Tibial artery (tissue), 4 donors: ENCODE measurements at regions of chr16 and their contacts with region 1.

Region 1: GRCh38 chr16:75110637-75111513 is 5.7 kb downstream of the LDHD start:
- DNase-seq: peak; percentile 90 to 95
- H3K4me3 ChIP-seq: peak overlapping the region; percentile 15 to 31
- H3K27ac ChIP-seq: peak overlapping the region; percentile 73 to 86
- H3K4me1 ChIP-seq: peaks cover 0 to 69% (median 45%) of the 10 kb centered on the region in 4 donors
- H3K27me3 ChIP-seq: no peaks in the 10 kb centered on the region
- CTCF ChIP-seq: peak; percentile 93 to 95

Region 2: DNA sequence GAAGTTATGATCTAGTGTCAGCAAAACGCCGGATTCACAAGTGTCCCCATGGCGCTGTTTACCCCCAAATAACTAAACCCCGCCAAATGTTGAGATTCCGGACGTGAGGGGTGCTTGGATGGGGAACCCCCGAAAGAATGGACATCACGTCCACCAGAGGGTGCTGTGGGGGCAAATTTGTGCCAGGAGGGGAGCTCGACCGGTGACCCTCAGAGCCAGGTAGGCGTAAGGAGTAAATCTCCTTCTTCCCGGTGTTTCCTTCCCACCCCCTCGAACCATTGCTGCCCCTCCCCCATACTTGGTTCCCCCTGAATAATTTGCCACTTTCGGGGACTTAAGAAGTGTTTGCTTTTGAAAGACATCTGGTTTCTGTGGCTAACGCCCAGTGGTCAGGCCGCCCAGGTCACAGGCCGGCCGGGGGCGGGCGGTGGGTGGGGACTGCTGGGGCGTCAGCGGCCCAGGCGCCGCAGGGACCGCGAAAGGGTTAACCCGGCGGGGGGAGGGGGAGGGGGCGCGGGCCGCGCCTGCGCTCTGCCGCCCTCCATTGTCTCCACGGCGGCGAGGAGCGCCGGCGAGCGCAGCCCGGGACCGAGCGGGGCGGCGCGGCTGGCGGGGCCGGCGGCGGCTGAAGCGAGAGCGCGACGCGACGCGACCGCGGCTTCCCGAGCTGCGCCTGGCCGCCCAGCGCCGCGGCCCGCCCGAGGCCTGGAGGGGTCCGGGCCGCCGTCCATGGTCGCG is 112.2 kb before region 1 on chr16 and contains the start of gene ZNRF1:
- intact Hi-C with region 1: loop called (anchors 1 kb)
- DNase-seq: peak; percentile 70 to 89
- H3K4me3 ChIP-seq: peak within 1 kb of the TSS; percentile 71 to 100
- H3K27ac ChIP-seq: peak within 1 kb of the TSS; percentile 75 to 78
- H3K4me1 ChIP-seq: peaks cover 0 to 22% (median 15%) of the 10 kb centered on the region in 4 donors
- H3K27me3 ChIP-seq: no peaks in the 10 kb centered on the region
- CTCF ChIP-seq: peak; percentile 77 to 83

Region 3: DNA sequence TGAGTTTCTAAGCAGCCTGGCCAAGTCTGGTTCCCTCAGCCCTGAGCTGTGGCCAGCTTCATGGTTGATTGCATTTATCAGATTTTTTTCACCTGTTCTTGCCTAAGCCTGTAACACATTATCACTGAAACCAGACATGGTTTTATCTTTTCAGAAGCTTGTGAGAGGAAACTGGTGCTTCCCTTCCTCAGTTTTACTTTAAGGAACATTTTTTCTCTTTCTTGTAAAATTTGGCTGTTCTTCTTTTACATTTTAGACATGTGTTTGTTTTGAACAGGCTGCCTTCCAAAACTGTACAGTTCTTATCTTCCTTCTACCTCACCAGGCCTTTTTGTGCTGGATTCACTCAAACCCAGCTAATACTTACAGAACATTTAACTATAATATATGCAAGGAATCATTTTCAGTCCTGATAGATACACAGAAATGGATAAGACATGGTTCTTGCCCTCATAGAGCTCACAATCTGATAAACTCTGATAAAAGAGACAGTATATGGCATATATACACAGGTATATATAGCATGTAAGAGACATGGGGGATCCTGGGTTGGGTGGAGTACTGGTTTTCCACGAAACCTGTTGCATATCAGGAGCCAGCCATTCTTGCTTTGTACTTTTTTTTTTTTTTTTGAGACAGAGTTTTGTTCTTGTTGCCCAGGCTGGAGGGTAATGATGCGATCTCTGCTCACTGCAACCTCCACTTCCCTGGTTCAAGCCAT is 67.5 kb before region 1 on chr16:
- intact Hi-C with region 1: loop called (anchors 10 kb)
- DNase-seq: no peak
- H3K4me3 ChIP-seq: no peak overlapping the region
- H3K27ac ChIP-seq: peak overlapping the region; percentile 39 to 62
- H3K4me1 ChIP-seq: peaks cover 0 to 44% (median 26%) of the 10 kb centered on the region in 4 donors
- H3K27me3 ChIP-seq: no peaks in the 10 kb centered on the region
- CTCF ChIP-seq: no peak